ENCODE measurements at regions of chr11 and their contacts with region 1.

Region 1: GRCh38 chr11:15819679-15820286 is 536.6 kb downstream of the SOX6 start:
- DNase-seq: peak; percentile 70
- ATAC-seq: peak; percentile 68
- H3K4me3 Mint-ChIP-seq: no peak overlapping the region
- H3K27ac Mint-ChIP-seq: no peak overlapping the region
- H3K4me1 Mint-ChIP-seq: peaks cover 15% of the 10 kb centered on the region
- H3K27me3 Mint-ChIP-seq: peaks cover 15% of the 10 kb centered on the region

Region 2: DNA sequence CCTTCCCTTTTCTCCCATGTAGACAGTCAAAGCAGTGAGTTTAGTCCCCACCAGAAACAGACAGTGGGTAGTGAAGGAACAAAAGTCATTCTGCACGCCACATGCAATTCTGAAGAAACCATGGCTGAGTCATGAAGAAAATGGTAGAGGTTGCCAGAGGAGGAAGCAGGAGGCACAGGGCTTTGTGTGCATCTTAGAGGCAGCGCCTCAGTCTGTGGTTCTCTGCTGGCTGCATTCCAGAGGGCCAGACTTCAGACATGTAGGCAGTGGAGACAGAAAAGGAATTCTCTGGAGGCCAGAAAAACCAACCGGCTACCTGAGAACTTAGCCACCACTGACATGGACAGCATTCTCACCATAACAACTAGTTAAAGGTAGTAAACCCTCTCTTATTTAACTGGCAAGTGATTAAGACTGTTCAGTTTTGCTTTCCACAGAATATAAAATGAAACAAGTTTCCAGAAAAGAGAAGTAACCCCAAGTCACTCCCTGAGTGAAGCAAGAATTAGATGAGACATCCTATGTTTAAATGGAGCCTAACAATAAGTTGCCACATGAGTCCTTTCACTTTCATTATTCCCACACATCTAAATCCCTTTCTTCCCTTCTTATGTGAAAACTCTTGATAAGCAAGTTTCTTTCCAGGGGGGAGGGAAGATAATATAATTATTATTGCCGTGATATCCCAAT is 19.5 kb before region 1 on chr11:
- CTCF ChIA-PET with region 1: interaction called, 4 read pairs
- POLR2A ChIA-PET with region 1: no interaction called
- intact Hi-C with region 1: loop called in 1 of 2 experiments (anchors 2 kb)
- DNase-seq: peak; percentile 28
- ATAC-seq: peak; percentile 71
- H3K4me3 Mint-ChIP-seq: no peak overlapping the region
- H3K27ac Mint-ChIP-seq: peak overlapping the region; percentile 23
- H3K4me1 Mint-ChIP-seq: peaks cover 16% of the 10 kb centered on the region
- H3K27me3 Mint-ChIP-seq: no peaks in the 10 kb centered on the region

Region 3: GRCh38 chr11:15830741-15831428 is 11.1 kb after region 1 on chr11:
- CTCF ChIA-PET with region 1: interaction called, 11 read pairs
- POLR2A ChIA-PET with region 1: no interaction called
- intact Hi-C with region 1: no loop called
- DNase-seq: no peak
- ATAC-seq: no peak
- H3K4me3 Mint-ChIP-seq: no peak overlapping the region
- H3K27ac Mint-ChIP-seq: no peak overlapping the region
- H3K4me1 Mint-ChIP-seq: no peaks in the 10 kb centered on the region
- H3K27me3 Mint-ChIP-seq: peaks cover 3% of the 10 kb centered on the region

Region 4: DNA sequence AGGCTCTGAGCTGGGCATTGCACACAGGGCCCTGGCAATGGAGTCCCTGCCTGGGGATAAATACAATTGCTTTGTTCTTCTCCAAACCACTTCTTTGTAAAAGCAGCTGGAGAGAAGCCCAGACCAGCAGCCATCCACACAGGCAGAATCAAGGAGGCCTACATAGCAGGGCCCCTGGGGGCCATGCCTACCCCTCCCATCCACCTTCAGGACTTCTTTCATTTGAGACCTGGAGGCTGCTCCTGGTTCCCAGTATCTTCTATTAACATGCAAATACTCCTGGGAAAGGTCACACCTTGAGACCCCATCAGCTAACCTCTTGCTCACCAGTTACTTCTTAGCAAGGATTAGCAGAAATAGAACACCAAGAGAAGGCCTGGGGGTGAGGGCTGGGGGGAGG is 25.5 kb after region 1 on chr11:
- CTCF ChIA-PET with region 1: no interaction called
- POLR2A ChIA-PET with region 1: no interaction called
- intact Hi-C with region 1: no loop called
- DNase-seq: no peak
- ATAC-seq: no peak
- H3K4me3 Mint-ChIP-seq: no peak overlapping the region
- H3K27ac Mint-ChIP-seq: no peak overlapping the region
- H3K4me1 Mint-ChIP-seq: no peaks in the 10 kb centered on the region
- H3K27me3 Mint-ChIP-seq: peaks cover 8% of the 10 kb centered on the region

Region 5: GRCh38 chr11:15871904-15872653 is 52.3 kb after region 1 on chr11:
- CTCF ChIA-PET with region 1: no interaction called
- POLR2A ChIA-PET with region 1: no interaction called
- intact Hi-C with region 1: no loop called
- DNase-seq: no peak
- ATAC-seq: no peak
- H3K4me3 Mint-ChIP-seq: no peak overlapping the region
- H3K27ac Mint-ChIP-seq: no peak overlapping the region
- H3K4me1 Mint-ChIP-seq: no peaks in the 10 kb centered on the region
- H3K27me3 Mint-ChIP-seq: no peaks in the 10 kb centered on the region

Region 6: GRCh38 chr11:15969281-15969680 is 149.5 kb after region 1 on chr11:
- CTCF ChIA-PET with region 1: no interaction called
- POLR2A ChIA-PET with region 1: no interaction called
- intact Hi-C with region 1: no loop called
- DNase-seq: no peak
- ATAC-seq: no peak
- H3K4me3 Mint-ChIP-seq: no peak overlapping the region
- H3K27ac Mint-ChIP-seq: no peak overlapping the region
- H3K4me1 Mint-ChIP-seq: no peaks in the 10 kb centered on the region
- H3K27me3 Mint-ChIP-seq: peaks cover 2% of the 10 kb centered on the region

Region 7: DNA sequence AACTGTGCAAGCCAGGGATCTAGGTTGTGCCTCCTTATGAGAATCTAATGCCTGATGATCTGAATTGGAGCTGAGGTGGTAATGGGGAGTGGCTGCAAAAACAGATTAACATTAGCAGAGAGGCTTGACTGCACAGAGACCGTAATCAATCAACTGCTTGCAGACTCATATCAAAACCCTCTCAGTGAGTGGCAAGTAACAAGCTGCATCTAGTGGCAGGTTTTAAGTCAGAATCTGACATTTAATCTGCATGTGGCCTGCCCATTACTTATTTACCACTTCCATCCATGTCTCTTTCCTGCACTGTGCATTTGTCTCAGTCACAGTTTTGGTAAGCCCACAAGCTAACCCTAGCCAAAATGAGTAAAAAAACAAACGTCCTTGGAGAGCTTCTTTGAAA is 929.9 kb after region 1 on chr11:
- CTCF ChIA-PET with region 1: no interaction called
- POLR2A ChIA-PET with region 1: no interaction called
- intact Hi-C with region 1: no loop called
- DNase-seq: peak; percentile 27
- ATAC-seq: peak; percentile 83
- H3K4me3 Mint-ChIP-seq: no peak overlapping the region
- H3K27ac Mint-ChIP-seq: peak overlapping the region; percentile 76
- H3K4me1 Mint-ChIP-seq: peaks cover 50% of the 10 kb centered on the region
- H3K27me3 Mint-ChIP-seq: no peaks in the 10 kb centered on the region